ENCODE measurements at regions of chr5 and their contacts with region 1.

Region 1: GRCh38 chr5:65562731-65563701 is at the starts of genes CENPK and PPWD1:
- DNase-seq: peak; percentile 93
- ATAC-seq: peak; percentile 100
- H3K4me3 ChIP-seq: peak within 1 kb of the TSS; percentile 66 to 98 (median 84)
- H3K27ac ChIP-seq: peak within 1 kb of the TSS; percentile 94
- H3K4me1 ChIP-seq: peaks cover 28% of the 10 kb centered on the region
- H3K27me3 ChIP-seq: no peaks in the 10 kb centered on the region; a peak in 1 of 5 replicates
- CTCF ChIP-seq: no peak
- EP300 ChIP-seq: no peak; a peak in 1 of 4 replicates
- POLR2A ChIP-seq: peak; percentile 73 to 91
- RAD21 ChIP-seq: no peak
- total RNA-seq, gene CENPK: 54.4 and 75.0 TPM in 2 replicates
- total RNA-seq, gene PPWD1: 44.3 and 60.8 TPM in 2 replicates

Region 2: GRCh38 chr5:65525726-65526125 is 37.3 kb before region 1 on chr5:
- CTCF ChIA-PET with region 1: no interaction called
- POLR2A ChIA-PET with region 1: no interaction called
- in situ Hi-C with region 1: no loop called
- intact Hi-C with region 1: no loop called
- DNase-seq: no peak
- ATAC-seq: no peak
- H3K4me3 ChIP-seq: no peak overlapping the region
- H3K27ac ChIP-seq: no peak overlapping the region
- H3K4me1 ChIP-seq: no peaks in the 10 kb centered on the region
- H3K27me3 ChIP-seq: no peaks in the 10 kb centered on the region
- CTCF ChIP-seq: no peak
- EP300 ChIP-seq: no peak
- POLR2A ChIP-seq: no peak
- RAD21 ChIP-seq: no peak

Region 3: DNA sequence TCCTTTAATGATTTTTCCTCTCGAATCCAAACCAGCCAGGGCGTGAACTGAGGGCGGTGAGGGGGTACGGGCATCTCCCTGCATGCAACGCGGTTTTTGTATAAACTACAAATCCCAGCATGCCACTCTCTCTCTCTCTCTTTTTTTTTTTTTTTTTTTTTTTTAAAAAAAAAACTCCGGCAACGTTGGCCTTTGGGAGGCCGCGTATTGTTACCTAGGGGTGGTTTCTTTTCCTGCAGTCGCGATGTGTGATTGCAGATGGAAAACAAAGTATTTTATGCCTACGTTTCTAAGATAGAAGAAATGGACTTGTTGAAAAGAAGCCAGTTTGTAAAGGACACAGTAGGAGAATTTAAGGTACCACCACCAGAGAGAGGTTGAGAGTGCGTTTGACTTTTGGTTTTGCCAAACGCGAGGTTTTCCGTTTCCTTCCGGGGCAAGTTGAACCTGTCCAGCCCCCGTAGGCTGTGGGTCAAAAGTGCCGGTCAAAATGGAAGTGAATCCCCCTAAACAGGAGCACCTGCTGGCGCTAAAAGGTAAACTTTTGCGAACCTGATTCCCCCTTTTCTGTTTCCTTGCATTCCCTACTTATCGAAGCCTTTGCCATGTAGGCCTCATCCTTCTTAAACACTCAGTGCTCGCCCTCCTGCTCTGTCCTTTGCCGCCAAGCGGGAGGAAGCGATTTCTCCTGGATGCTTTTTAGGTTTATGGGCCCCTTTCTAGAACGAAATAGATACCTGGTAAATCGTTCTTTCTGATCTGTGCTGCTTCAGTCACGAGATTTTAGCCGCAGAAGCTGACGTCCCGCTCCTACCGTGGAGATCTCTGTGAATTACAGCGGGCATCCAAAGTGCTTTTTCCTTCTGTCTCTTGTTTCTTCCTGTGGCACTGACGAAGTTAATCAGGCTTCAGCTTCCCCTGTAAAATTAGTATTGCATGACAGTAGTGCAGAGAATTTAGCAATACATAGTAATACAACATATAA is 61.8 kb after region 1 on chr5 and contains the starts of genes SHLD3 and TRAPPC13:
- CTCF ChIA-PET with region 1: no interaction called
- POLR2A ChIA-PET with region 1: interaction called, 11 read pairs
- in situ Hi-C with region 1: no loop called
- intact Hi-C with region 1: loop called (anchors 5 kb)
- DNase-seq: peak; percentile 88
- ATAC-seq: peak; percentile 84
- H3K4me3 ChIP-seq: peak within 1 kb of the TSS; percentile 90 to 98 (median 95)
- H3K27ac ChIP-seq: peak within 1 kb of the TSS; percentile 95
- H3K4me1 ChIP-seq: peaks cover 28% of the 10 kb centered on the region
- H3K27me3 ChIP-seq: peaks cover 0 to 4% of the 10 kb centered on the region in 2 experiments; a peak in 2 of 5 replicates
- CTCF ChIP-seq: no peak
- EP300 ChIP-seq: no peak
- POLR2A ChIP-seq: peak; percentile 43 to 55
- RAD21 ChIP-seq: no peak
- total RNA-seq, gene SHLD3: 6.8 and 8.1 TPM in 2 replicates
- total RNA-seq, gene TRAPPC13: 19.6 and 24.3 TPM in 2 replicates

Region 4: GRCh38 chr5:66144074-66144833 is 581.2 kb after region 1 on chr5 and contains the start of gene SREK1:
- CTCF ChIA-PET with region 1: no interaction called
- POLR2A ChIA-PET with region 1: no interaction called
- in situ Hi-C with region 1: no loop called
- intact Hi-C with region 1: loop called (anchors 5 kb)
- DNase-seq: peak; percentile 82
- ATAC-seq: peak; percentile 95
- H3K4me3 ChIP-seq: peak within 1 kb of the TSS; percentile 82 to 92 (median 90)
- H3K27ac ChIP-seq: peak within 1 kb of the TSS; percentile 98
- H3K4me1 ChIP-seq: peaks cover 27% of the 10 kb centered on the region
- H3K27me3 ChIP-seq: no peaks in the 10 kb centered on the region; a peak in 1 of 5 replicates
- CTCF ChIP-seq: no peak
- EP300 ChIP-seq: no peak
- POLR2A ChIP-seq: peak; percentile 83 to 89
- RAD21 ChIP-seq: peak; percentile 53; the same call in 1 of the 2 replicates
- total RNA-seq, gene SREK1: 46.5 and 90.9 TPM in 2 replicates

Measured in HepG2 (cell line).